Spleen (tissue), 13 donors: ENCODE measurements at regions of chr12 and their contacts with region 1.

Region 1: DNA sequence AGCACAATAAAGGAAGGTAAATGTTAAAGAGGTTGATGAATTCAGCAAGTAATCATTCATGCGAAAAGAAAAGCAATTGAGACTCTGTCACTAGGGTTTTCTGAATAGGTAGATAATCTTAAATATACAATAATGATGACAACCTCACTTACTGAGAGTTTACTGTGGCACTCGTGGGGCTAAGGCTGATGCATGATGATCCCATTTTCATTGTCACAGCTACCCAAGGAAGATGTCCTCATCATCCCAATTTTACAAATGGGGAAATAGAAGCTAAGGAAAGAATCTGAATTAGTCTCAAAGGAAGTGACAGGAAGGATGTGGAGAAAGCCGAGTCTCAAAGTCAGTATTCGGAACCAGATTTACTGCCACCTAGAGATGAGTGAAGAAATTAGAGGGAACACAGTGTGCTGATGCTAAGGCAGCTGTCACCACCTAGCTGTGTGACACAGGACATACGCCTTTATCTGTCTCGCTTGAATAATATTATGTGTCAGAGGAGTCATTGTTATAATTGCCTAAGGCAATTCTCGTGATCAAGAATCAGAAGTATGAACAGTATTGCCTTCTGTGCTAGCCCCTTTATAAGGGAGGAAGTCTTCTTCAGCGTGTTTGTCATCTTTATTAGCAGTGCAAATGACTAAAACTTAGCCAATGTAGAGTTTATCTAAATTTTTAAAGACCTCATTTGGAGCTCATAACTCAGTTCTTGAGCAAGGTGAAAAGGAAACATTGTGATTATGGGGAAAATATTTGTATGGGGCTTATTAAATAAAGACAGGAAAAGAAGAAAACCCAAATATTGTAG is 63.2 kb downstream of the ERGIC2 start:
- DNase-seq: no peak
- H3K4me3 ChIP-seq: no peak overlapping the region
- H3K27ac ChIP-seq: no peak overlapping the region
- H3K4me1 ChIP-seq: peaks cover 0 to 9% (median 5%) of the 10 kb centered on the region in 6 donors
- H3K27me3 ChIP-seq: no peaks in the 10 kb centered on the region
- CTCF ChIP-seq: peak; percentile 50 to 92 (median 74)
- POLR2A ChIP-seq: no peak

Region 2: DNA sequence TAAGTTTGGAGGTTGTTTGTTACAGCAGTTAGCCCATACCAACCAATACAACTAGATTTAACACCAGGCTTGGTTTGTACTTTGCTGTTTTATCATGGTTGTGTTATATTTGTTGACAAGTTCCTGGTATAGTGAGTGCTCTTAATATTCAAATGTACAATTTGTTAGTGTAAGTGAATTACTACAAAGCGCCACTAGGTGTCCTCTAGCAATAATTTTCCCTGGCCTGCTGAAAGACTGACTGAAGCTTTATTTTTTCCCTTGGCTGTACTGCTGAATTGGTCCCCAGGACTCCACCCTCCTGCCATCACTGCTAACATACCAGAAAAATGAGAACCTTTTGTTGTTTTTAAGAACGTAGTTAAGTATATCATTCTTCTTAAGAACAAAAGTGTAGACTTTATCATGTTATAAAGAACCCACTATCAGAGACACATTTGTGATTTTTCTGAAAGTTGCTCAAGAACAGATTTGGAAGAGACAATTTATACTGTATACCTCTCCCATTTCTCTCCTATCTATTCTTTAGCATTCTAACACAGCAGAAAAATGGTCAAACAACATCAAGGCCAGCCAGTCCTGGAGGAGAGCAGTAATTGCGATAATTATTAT is 244.0 kb before region 1 on chr12:
- intact Hi-C with region 1: loop called (anchors 5 kb)
- DNase-seq: no peak
- H3K4me3 ChIP-seq: no peak overlapping the region
- H3K27ac ChIP-seq: no peak overlapping the region
- H3K4me1 ChIP-seq: no peaks in the 10 kb centered on the region
- H3K27me3 ChIP-seq: no peaks in the 10 kb centered on the region
- CTCF ChIP-seq: peak in 9 of 11 experiments; percentile 27 to 70 (median 64)
- POLR2A ChIP-seq: no peak

Region 3: DNA sequence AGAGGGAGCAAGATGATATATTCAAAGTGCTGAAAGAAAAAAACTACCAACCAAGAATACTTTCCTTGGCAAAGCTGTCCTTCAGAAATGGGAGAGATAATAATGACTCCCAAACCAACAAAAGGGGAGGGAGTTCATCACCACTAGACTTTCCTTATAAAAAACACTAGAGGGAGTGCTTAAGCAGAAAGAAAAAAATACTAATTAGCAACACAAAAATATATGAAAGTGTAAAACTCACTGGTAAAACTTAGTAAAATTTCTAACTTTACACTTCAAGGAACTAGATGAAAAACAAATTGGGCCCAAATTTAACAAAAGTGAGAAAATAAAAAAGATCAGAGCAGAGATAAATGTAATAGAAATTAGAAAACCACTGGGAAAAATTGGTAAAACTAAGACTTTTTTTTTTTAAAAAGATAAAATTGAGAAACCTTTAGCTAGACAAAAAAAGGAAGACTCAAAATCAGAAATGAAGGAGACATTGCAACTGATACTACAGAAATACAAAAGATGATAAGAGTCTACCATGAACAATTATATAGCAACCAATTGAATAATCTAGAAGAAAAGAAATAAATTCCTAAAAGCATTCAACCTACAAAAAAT is 229.0 kb before region 1 on chr12:
- intact Hi-C with region 1: loop called (anchors 5 kb)
- DNase-seq: no peak
- H3K4me3 ChIP-seq: no peak overlapping the region
- H3K27ac ChIP-seq: no peak overlapping the region
- H3K4me1 ChIP-seq: no peaks in the 10 kb centered on the region
- H3K27me3 ChIP-seq: no peaks in the 10 kb centered on the region
- CTCF ChIP-seq: peak in 9 of 11 experiments; percentile 11 to 63 (median 36)
- POLR2A ChIP-seq: no peak

Region 4: GRCh38 chr12:29273178-29273843 is 44.4 kb before region 1 on chr12:
- intact Hi-C with region 1: no loop called
- DNase-seq: no peak
- H3K4me3 ChIP-seq: no peak overlapping the region
- H3K27ac ChIP-seq: no peak overlapping the region
- H3K4me1 ChIP-seq: no peaks in the 10 kb centered on the region
- H3K27me3 ChIP-seq: no peaks in the 10 kb centered on the region
- CTCF ChIP-seq: no peak
- POLR2A ChIP-seq: no peak